Aorta (tissue), 5 donors: ENCODE measurements at regions of chr5 and their contacts with region 1.

Region 1: DNA sequence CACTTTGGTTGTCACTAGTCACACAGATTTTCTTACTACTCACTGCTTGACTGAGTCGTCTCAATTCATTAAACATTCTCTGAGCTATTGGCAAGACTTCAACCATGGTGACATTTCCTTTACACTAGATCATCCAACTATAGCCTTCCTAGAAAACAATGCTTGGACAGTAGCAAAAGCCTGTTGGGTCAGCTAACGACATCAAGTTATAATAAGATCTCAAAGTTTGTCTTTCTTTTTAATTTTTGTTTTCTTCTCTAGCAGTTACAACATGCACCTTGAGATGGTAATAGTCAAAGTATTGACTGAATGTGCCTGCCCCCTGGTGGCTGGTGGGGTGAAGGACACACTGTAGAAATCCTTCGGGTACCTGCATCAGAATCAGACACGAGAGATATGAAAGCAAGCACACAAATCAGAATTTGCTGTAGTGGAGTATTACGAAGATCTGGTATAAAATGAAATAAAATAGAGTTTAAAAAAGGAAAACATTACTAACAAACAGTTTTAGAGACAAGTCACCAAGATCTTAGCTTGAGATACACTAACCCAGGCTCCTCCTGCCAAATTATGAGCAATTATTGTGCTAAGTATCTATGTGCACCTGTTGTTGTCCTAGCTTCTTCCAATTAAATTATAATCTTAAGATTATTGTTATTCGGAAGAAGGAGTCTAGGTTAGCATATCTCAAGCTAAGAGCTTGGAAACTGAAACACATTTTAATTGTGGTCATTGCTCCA is 81.2 kb downstream of the ARL15 start:
- DNase-seq: peak; percentile 72 to 85
- ATAC-seq: no peak
- H3K4me3 ChIP-seq: no peak overlapping the region
- H3K27ac ChIP-seq: no peak overlapping the region
- H3K4me1 ChIP-seq: peaks cover 0 to 2% of the 10 kb centered on the region in 2 donors
- H3K27me3 ChIP-seq: no peaks in the 10 kb centered on the region

Region 2: GRCh38 chr5:53170748-53171349 is 1058.4 kb before region 1 on chr5:
- intact Hi-C with region 1: loop called (anchors 10 kb)
- DNase-seq: no peak
- ATAC-seq: no peak
- H3K4me3 ChIP-seq: no peak overlapping the region
- H3K27ac ChIP-seq: no peak overlapping the region
- H3K4me1 ChIP-seq: no peaks in the 10 kb centered on the region
- H3K27me3 ChIP-seq: no peaks in the 10 kb centered on the region